ENCODE measurements at regions of chr9 and their contacts with region 1.

Region 1: GRCh38 chr9:36632892-36633291 is 60.2 kb downstream of the MELK start:
- DNase-seq: peak; percentile 45
- ATAC-seq: no peak
- H3K4me3 ChIP-seq: no peak overlapping the region
- H3K4me3 Mint-ChIP-seq: no peak overlapping the region
- H3K27ac ChIP-seq: no peak overlapping the region
- H3K27ac Mint-ChIP-seq: no peak overlapping the region
- H3K4me1 ChIP-seq: no peaks in the 10 kb centered on the region
- H3K4me1 Mint-ChIP-seq: no peaks in the 10 kb centered on the region
- H3K27me3 ChIP-seq: no peaks in the 10 kb centered on the region
- H3K27me3 Mint-ChIP-seq: no peaks in the 10 kb centered on the region
- CTCF ChIP-seq: peak; percentile 75

Region 2: GRCh38 chr9:36530224-36530623 is 102.7 kb before region 1 on chr9:
- CTCF ChIA-PET with region 1: no interaction called
- POLR2A ChIA-PET with region 1: no interaction called
- intact Hi-C with region 1: no loop called
- DNase-seq: no peak
- ATAC-seq: no peak
- H3K4me3 ChIP-seq: no peak overlapping the region
- H3K4me3 Mint-ChIP-seq: no peak overlapping the region
- H3K27ac ChIP-seq: no peak overlapping the region
- H3K27ac Mint-ChIP-seq: no peak overlapping the region
- H3K4me1 ChIP-seq: no peaks in the 10 kb centered on the region
- H3K4me1 Mint-ChIP-seq: no peaks in the 10 kb centered on the region
- H3K27me3 ChIP-seq: no peaks in the 10 kb centered on the region
- H3K27me3 Mint-ChIP-seq: peaks cover 7% of the 10 kb centered on the region
- CTCF ChIP-seq: no peak

Region 3: GRCh38 chr9:36572515-36573418 is 60.1 kb before region 1 on chr9 and contains the start of gene MELK:
- CTCF ChIA-PET with region 1: no interaction called
- POLR2A ChIA-PET with region 1: no interaction called
- intact Hi-C with region 1: no loop called
- DNase-seq: peak; percentile 86
- ATAC-seq: peak; percentile 90
- H3K4me3 ChIP-seq: peak within 1 kb of the TSS; percentile 67 to 97 (median 81)
- H3K4me3 Mint-ChIP-seq: peak within 1 kb of the TSS; percentile 90
- H3K27ac ChIP-seq: peak within 1 kb of the TSS; percentile 18 to 67
- H3K27ac Mint-ChIP-seq: peak within 1 kb of the TSS; percentile 71
- H3K4me1 ChIP-seq: peaks cover 8 to 16% of the 10 kb centered on the region in 2 donors
- H3K4me1 Mint-ChIP-seq: peaks cover 13% of the 10 kb centered on the region
- H3K27me3 ChIP-seq: peaks cover 0 to 2% (median 0%) of the 10 kb centered on the region in 4 experiments
- H3K27me3 Mint-ChIP-seq: peaks cover 4% of the 10 kb centered on the region
- CTCF ChIP-seq: no peak
- total RNA-seq, gene MELK: 0.17 TPM in 1 of 2 replicates, not detected in the other

Region 4: DNA sequence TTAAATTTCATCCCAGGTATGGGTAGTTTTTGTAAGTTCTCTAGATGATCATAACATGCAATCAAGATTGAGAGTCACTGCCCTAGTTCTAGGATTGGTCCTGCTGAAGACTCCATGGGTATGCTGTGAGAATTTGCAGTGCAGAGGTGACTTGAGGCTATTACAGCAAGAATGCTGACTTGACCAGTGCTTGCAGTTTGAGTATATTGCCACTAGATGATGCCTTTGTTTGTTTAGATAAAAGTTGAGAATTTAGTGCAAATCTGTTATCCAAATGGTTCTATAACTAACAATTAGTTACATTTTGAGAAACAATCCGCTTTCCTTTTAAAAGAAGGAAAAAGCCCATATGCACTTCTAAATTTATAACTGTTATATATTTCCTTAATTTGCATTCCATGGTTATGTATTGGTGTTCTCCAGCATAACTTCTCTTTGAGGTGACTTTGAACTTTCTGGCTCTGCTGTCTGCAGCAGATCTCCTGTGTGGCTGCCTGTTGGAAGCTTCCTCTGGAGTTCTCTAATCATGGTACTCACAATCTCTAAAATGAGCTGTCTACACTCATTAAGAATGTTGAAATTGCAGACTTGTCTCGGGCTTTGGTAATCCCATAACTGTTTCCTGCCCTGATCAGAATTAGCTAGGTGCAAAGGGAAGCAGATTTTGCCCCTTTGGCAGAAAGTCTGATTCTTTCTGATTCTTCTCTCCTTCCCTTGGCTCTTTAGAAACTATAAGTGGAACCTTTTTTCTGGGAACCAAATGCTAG is 35.3 kb before region 1 on chr9:
- CTCF ChIA-PET with region 1: no interaction called
- POLR2A ChIA-PET with region 1: no interaction called
- intact Hi-C with region 1: no loop called
- DNase-seq: peak; percentile 16
- ATAC-seq: no peak
- H3K4me3 ChIP-seq: no peak overlapping the region
- H3K4me3 Mint-ChIP-seq: no peak overlapping the region
- H3K27ac ChIP-seq: no peak overlapping the region
- H3K27ac Mint-ChIP-seq: no peak overlapping the region
- H3K4me1 ChIP-seq: no peaks in the 10 kb centered on the region
- H3K4me1 Mint-ChIP-seq: peaks cover under 1% of the 10 kb centered on the region
- H3K27me3 ChIP-seq: no peaks in the 10 kb centered on the region
- H3K27me3 Mint-ChIP-seq: no peaks in the 10 kb centered on the region
- CTCF ChIP-seq: peak; percentile 32

Region 5: GRCh38 chr9:36728651-36729520 is 96.0 kb after region 1 on chr9:
- CTCF ChIA-PET with region 1: interaction called, 202 read pairs
- POLR2A ChIA-PET with region 1: no interaction called
- intact Hi-C with region 1: loop called (anchors 1 kb)
- DNase-seq: peak; percentile 68
- ATAC-seq: peak; percentile 78
- H3K4me3 ChIP-seq: no peak overlapping the region
- H3K4me3 Mint-ChIP-seq: no peak overlapping the region
- H3K27ac ChIP-seq: no peak overlapping the region
- H3K27ac Mint-ChIP-seq: no peak overlapping the region
- H3K4me1 ChIP-seq: peaks cover 9 to 10% of the 10 kb centered on the region in 2 donors
- H3K4me1 Mint-ChIP-seq: peaks cover 10% of the 10 kb centered on the region
- H3K27me3 ChIP-seq: no peaks in the 10 kb centered on the region
- H3K27me3 Mint-ChIP-seq: no peaks in the 10 kb centered on the region
- CTCF ChIP-seq: peak; percentile 91

Region 6: GRCh38 chr9:36855448-36856315 is 222.8 kb after region 1 on chr9:
- CTCF ChIA-PET with region 1: interaction called, 4 read pairs
- POLR2A ChIA-PET with region 1: no interaction called
- intact Hi-C with region 1: loop called (anchors 5 kb)
- DNase-seq: peak; percentile 42
- ATAC-seq: peak; percentile 72
- H3K4me3 ChIP-seq: no peak overlapping the region
- H3K4me3 Mint-ChIP-seq: no peak overlapping the region
- H3K27ac ChIP-seq: peak overlapping the region in 1 of 2 donors; percentile 70
- H3K27ac Mint-ChIP-seq: peak overlapping the region; percentile 89
- H3K4me1 ChIP-seq: peaks cover 14 to 34% of the 10 kb centered on the region in 2 donors
- H3K4me1 Mint-ChIP-seq: peaks cover 34% of the 10 kb centered on the region
- H3K27me3 ChIP-seq: no peaks in the 10 kb centered on the region
- H3K27me3 Mint-ChIP-seq: no peaks in the 10 kb centered on the region
- CTCF ChIP-seq: peak; percentile 15

Region 7: DNA sequence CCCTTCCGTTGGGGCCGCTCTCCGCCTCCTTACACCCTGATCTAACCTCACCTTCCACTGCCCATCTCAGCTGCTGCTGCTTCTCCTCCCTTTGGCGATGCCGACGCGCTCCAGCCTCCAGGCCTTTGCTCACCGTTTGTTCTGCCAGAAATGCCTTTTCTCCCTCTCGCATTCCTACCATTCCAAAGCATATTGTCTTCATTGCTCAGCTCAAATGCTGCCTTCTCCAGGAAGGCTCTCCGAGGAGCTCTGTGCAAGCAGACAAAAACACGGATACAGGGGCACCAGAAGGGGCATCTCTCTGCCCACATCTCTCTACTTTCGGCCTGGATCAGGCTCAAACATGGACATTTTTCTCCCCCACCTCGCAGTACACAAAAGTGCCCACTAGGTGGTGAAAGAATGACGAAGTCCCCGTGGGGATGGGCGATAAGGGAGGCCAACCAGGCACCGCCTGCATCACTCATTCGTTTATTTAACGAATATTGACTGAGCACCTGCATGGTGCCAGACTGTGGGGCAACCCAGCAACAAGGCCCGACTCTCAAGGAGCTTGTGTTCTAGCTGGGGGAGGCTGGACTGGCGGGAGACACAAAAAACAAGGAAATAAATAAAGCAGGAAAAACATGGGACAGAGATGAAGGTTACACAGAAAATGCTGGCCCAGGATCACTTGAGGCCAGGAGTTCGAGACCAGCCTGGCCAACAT is 782.3 kb after region 1 on chr9:
- CTCF ChIA-PET with region 1: no interaction called
- POLR2A ChIA-PET with region 1: no interaction called
- intact Hi-C with region 1: loop called (anchors 10 kb)
- DNase-seq: peak; percentile 86
- ATAC-seq: peak; percentile 84
- H3K4me3 ChIP-seq: no peak overlapping the region
- H3K4me3 Mint-ChIP-seq: peak overlapping the region; percentile 67
- H3K27ac ChIP-seq: no peak overlapping the region
- H3K27ac Mint-ChIP-seq: peak overlapping the region; percentile 79
- H3K4me1 ChIP-seq: peaks cover 32 to 45% of the 10 kb centered on the region in 2 donors
- H3K4me1 Mint-ChIP-seq: peaks cover 42% of the 10 kb centered on the region
- H3K27me3 ChIP-seq: no peaks in the 10 kb centered on the region
- H3K27me3 Mint-ChIP-seq: no peaks in the 10 kb centered on the region
- CTCF ChIP-seq: peak; percentile 83